ENCODE measurements at regions of chr15 and their contacts with region 1.

Region 1: DNA sequence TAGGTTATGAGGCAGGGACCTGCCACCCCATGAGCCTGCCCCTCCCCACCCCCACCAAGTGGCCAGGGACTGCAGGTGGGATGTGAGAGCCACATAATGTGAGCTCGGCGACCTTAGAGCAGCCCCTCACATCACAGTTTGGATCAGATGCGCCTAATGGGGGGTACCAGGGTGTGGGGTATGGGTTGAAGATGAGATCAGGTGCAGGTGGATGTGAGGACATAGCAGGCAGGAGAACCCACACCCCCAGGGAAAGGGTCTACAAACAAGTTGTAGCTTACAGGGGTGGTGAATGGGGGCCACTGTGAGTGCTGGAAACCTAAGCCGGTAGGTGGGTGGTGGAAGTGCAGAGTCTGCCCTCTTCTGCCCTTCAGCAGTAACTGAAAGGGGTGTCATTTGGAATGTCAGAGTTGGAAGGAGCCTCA is 94.0 kb downstream of the CORO2B start:
- DNase-seq: no peak
- H3K4me3 ChIP-seq: no peak overlapping the region
- H3K27ac ChIP-seq: no peak overlapping the region
- H3K27me3 ChIP-seq: no peaks in the 10 kb centered on the region
- CTCF ChIP-seq: peak; percentile 42; the same call in 1 of the 2 replicates

Region 2: DNA sequence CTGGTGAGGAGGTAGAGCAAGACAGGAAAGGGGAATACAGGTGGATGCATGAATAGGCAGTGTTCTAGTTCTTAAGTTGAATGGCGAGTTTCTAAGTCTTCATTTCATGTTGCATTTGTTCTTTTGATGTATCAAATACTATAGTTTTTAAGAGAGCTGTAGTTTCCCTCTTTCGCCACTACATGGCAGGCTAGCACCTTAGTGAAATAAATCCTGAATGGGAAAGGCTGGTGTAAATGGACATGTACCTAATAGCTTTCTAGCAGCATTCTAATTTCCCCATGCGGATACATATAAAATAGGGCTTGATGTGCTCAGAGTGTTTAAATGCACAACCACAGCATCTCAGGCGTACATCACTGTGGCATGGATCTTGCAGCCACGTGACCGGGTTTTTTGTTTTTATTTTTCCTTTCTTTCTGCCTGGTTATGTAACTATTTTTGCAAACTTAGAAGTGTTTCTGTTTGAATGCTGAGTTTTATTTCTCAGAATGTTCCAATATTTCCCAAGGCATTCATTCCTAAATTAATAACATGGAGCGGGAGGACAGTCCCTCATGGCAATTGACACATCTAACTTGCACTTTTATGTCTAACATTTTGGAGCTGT is 419.8 kb before region 1 on chr15:
- CTCF ChIA-PET with region 1: interaction called, 16 read pairs
- POLR2A ChIA-PET with region 1: no interaction called
- DNase-seq: peak; percentile 66
- H3K4me3 ChIP-seq: no peak overlapping the region
- H3K27ac ChIP-seq: no peak overlapping the region
- H3K27me3 ChIP-seq: peaks cover 2% of the 10 kb centered on the region
- CTCF ChIP-seq: peak; percentile 89

Region 3: GRCh38 chr15:68441045-68441743 is 231.6 kb before region 1 on chr15:
- CTCF ChIA-PET with region 1: interaction called, 10 read pairs
- POLR2A ChIA-PET with region 1: no interaction called
- DNase-seq: peak; percentile 44
- H3K4me3 ChIP-seq: no peak overlapping the region
- H3K27ac ChIP-seq: peak overlapping the region; percentile 72
- H3K27me3 ChIP-seq: peaks cover 22% of the 10 kb centered on the region
- CTCF ChIP-seq: no peak

Region 4: DNA sequence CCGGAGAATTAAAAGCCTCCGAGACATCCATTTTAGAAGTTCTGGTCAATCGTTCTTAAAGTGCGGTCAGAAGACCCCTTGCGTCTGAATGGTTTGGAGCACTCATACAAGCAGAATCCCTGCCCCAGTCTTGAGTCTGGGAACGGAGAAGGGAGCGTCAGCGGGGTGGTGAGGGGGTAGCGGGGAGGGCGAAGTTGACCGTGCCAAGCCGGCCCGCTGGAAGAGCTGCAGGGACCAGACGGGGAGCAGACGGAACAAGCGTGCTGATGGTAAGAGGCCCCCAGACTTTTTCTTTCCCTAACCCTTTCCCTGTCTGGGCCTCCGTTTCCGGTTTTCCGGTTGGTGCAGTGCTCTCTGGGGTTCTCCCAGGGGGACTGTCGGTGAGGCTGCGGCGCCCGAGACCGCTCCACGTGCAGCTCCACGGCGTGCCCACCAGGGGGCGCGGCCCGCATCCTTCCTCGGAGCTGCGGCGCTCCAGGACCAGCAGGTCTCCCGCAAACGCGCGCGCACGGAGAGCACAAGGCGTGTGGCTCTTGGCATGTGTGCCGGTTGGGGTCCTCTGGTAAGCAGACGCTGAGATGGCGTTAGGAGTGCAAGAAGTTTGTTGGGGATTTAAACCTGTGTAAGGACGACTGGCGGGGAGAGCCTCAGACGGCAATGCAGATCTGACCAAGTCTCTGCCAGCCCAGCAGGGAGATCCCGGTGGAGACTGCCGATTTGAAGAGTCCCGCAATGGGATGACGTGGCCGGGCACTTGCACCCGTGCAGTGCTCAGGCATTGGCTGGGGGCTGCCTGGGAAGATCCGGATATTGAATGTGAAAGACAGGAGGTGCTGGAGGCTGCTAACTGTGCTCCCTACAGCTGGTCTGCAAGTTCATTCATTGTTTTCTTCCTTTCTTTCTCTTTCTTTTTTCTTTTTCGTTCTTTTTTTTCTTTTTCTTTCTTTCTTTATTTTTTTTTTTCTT is 113.2 kb before region 1 on chr15:
- CTCF ChIA-PET with region 1: interaction called, 138 read pairs
- POLR2A ChIA-PET with region 1: interaction called, 5 read pairs
- DNase-seq: peak; percentile 37
- H3K4me3 ChIP-seq: peak overlapping the region; percentile 65
- H3K27ac ChIP-seq: no peak overlapping the region
- H3K27me3 ChIP-seq: peaks cover 8% of the 10 kb centered on the region
- CTCF ChIP-seq: peak; percentile 89

Region 5: DNA sequence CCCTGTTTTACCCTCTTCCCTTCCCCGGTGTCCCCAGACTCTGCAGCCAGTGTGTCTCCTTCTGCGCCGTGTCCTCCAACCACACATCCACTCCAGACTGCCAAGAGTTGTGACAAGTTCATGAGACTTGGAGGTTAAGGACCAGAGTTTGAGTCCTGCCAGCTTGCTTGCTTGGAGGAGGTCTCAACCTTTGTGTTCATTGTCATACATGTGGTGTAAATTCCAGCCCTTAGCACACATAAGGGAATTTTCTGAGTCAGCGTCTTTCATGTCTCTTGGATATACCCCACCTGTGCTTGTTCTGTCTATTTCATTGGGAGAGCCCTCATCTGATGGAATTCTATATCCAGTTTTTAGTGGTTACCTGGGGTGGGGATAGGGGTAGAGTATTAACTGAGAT is 80.7 kb before region 1 on chr15:
- CTCF ChIA-PET with region 1: interaction called, 10 read pairs
- POLR2A ChIA-PET with region 1: no interaction called
- DNase-seq: no peak
- H3K4me3 ChIP-seq: no peak overlapping the region
- H3K27ac ChIP-seq: peak overlapping the region; percentile 47
- H3K27me3 ChIP-seq: no peaks in the 10 kb centered on the region
- CTCF ChIP-seq: no peak

Region 6: GRCh38 chr15:68691705-68692104 is 18.9 kb after region 1 on chr15:
- CTCF ChIA-PET with region 1: interaction called, 19 read pairs
- POLR2A ChIA-PET with region 1: no interaction called
- DNase-seq: no peak
- H3K4me3 ChIP-seq: no peak overlapping the region
- H3K27ac ChIP-seq: no peak overlapping the region
- H3K27me3 ChIP-seq: no peaks in the 10 kb centered on the region
- CTCF ChIP-seq: no peak

Region 7: GRCh38 chr15:69185706-69186105 is 512.9 kb after region 1 on chr15:
- CTCF ChIA-PET with region 1: no interaction called
- POLR2A ChIA-PET with region 1: no interaction called
- DNase-seq: no peak
- H3K4me3 ChIP-seq: no peak overlapping the region
- H3K27ac ChIP-seq: no peak overlapping the region
- H3K27me3 ChIP-seq: no peaks in the 10 kb centered on the region
- CTCF ChIP-seq: no peak